GM12878 (cell line): ENCODE measurements at regions of chrX and their contacts with region 1.

Region 1: DNA sequence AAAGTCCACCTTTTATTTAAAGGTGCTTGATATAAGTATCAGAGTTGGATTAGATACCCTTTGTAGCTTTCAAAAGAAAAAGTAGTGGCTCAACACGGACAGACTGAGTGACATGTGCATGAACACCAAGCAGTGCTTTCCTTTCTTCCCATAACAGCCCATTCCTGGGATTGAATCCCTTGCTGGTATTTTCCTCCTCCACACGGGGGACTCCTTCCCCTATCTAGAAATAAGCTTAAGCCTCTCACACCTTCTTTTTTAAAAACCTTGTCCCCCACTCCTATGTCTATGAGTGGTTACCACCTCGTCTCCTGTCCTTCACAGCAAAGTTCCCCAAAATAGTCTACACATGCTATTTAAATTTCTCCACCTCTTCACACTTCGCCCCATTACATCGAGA is 5.1 kb downstream of the AP1S2 start:
- DNase-seq: no peak
- ATAC-seq: no peak
- H3K4me3 ChIP-seq: no peak overlapping the region
- H3K27ac ChIP-seq: no peak overlapping the region
- H3K4me1 ChIP-seq: no peaks in the 10 kb centered on the region
- H3K27me3 ChIP-seq: no peaks in the 10 kb centered on the region
- CTCF ChIP-seq: peak in 2 of 3 experiments; percentile 32 to 34; a peak in 2 of 6 replicates
- EP300 ChIP-seq: no peak
- POLR2A ChIP-seq: no peak
- RAD21 ChIP-seq: peak; percentile 42

Region 2: DNA sequence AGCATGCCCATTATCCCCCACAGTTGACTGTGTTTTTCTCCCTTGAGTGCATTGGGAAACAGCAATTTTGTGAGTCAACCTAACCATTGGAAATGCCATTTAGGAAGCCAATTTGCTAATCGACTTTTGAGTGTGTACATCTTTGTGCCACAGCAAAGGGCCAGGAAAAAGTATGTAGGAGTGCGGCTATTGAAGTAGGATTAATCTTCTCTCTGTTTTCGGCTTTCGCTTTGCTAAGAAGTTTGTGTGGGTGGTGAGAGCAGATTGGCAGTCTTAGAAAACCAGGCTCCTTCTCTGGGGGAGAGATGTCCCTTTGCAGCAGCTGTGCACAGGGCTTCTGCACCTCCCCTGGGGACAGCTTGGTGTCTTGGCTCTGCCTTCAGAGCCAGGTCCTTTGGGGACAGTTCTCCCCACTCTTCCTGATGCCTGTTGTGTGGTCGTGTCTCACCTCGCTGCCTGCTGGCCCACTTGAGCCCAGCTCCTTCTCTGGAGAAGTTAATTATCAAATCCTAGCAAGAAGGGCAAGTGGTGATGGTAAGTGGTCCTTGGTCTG is 1894.4 kb before region 1 on chrX:
- CTCF ChIA-PET with region 1: no interaction called
- POLR2A ChIA-PET with region 1: no interaction called
- RAD21 ChIA-PET with region 1: no interaction called
- SMC1A ChIA-PET with region 1: no interaction called
- in situ Hi-C with region 1: no loop called
- intact Hi-C with region 1: no loop called
- DNase-seq: no peak
- ATAC-seq: no peak
- H3K4me3 ChIP-seq: no peak overlapping the region
- H3K27ac ChIP-seq: no peak overlapping the region
- H3K4me1 ChIP-seq: no peaks in the 10 kb centered on the region
- H3K27me3 ChIP-seq: no peaks in the 10 kb centered on the region; a peak in 1 of 4 replicates
- CTCF ChIP-seq: no peak
- EP300 ChIP-seq: no peak
- POLR2A ChIP-seq: no peak
- RAD21 ChIP-seq: no peak

Region 3: DNA sequence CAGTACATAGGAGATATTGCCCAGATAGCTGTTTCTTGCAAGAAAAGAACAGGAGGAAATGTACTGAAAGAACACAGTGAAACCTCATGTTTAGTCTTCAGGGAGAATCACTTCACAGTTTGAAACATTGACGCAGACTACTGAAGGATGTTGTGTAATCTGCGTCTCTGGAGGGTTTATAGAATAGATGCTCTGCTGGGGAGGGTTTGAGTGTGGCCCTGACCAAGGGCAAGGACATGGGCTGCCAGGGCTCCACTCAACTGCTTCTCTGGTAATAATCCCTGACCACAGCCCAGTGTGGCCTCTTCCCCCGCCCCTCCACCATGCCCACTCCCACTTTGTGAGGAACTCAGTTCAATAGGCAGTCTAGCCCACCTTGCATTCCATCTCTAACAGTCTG is 233.0 kb before region 1 on chrX:
- CTCF ChIA-PET with region 1: no interaction called
- POLR2A ChIA-PET with region 1: no interaction called
- RAD21 ChIA-PET with region 1: no interaction called
- SMC1A ChIA-PET with region 1: no interaction called
- in situ Hi-C with region 1: no loop called
- intact Hi-C with region 1: no loop called
- DNase-seq: no peak
- ATAC-seq: no peak
- H3K4me3 ChIP-seq: no peak overlapping the region
- H3K27ac ChIP-seq: no peak overlapping the region
- H3K4me1 ChIP-seq: no peaks in the 10 kb centered on the region
- H3K27me3 ChIP-seq: peaks cover 2 to 3% of the 10 kb centered on the region in 2 experiments
- CTCF ChIP-seq: no peak
- EP300 ChIP-seq: no peak
- POLR2A ChIP-seq: no peak
- RAD21 ChIP-seq: no peak

Region 4: GRCh38 chrX:15761564-15762191 is 87.9 kb before region 1 on chrX:
- CTCF ChIA-PET with region 1: interaction called, 3 read pairs
- POLR2A ChIA-PET with region 1: no interaction called
- RAD21 ChIA-PET with region 1: no interaction called
- SMC1A ChIA-PET with region 1: no interaction called
- in situ Hi-C with region 1: no loop called
- intact Hi-C with region 1: loop called (anchors 5 kb)
- DNase-seq: no peak
- ATAC-seq: peak; percentile 90
- H3K4me3 ChIP-seq: no peak overlapping the region
- H3K27ac ChIP-seq: no peak overlapping the region
- H3K4me1 ChIP-seq: no peaks in the 10 kb centered on the region
- H3K27me3 ChIP-seq: no peaks in the 10 kb centered on the region
- CTCF ChIP-seq: peak; percentile 83 to 88 (median 87)
- EP300 ChIP-seq: no peak
- POLR2A ChIP-seq: no peak
- RAD21 ChIP-seq: peak; percentile 89

Region 5: GRCh38 chrX:15815779-15816437 is 33.6 kb before region 1 on chrX:
- CTCF ChIA-PET with region 1: interaction called, 11 read pairs
- POLR2A ChIA-PET with region 1: interaction called, 3 read pairs
- RAD21 ChIA-PET with region 1: interaction called, 11 read pairs
- SMC1A ChIA-PET with region 1: interaction called, 6 read pairs
- in situ Hi-C with region 1: no loop called
- intact Hi-C with region 1: no loop called
- DNase-seq: peak; percentile 8
- ATAC-seq: peak; percentile 96
- H3K4me3 ChIP-seq: no peak overlapping the region
- H3K27ac ChIP-seq: no peak overlapping the region
- H3K4me1 ChIP-seq: peaks cover 6% of the 10 kb centered on the region; the same call in 1 of the 2 replicates
- H3K27me3 ChIP-seq: no peaks in the 10 kb centered on the region
- CTCF ChIP-seq: peak; percentile 45 to 51 (median 49); a peak in 5 of 6 replicates
- EP300 ChIP-seq: no peak
- POLR2A ChIP-seq: no peak
- RAD21 ChIP-seq: peak; percentile 40; the same call in 1 of the 2 replicates

Region 6: GRCh38 chrX:15903186-15903681 is 53.7 kb after region 1 on chrX:
- CTCF ChIA-PET with region 1: no interaction called
- POLR2A ChIA-PET with region 1: interaction called, 5 read pairs
- RAD21 ChIA-PET with region 1: interaction called, 20 read pairs
- SMC1A ChIA-PET with region 1: interaction called, 16 read pairs
- in situ Hi-C with region 1: no loop called
- intact Hi-C with region 1: no loop called
- DNase-seq: peak; percentile 84
- ATAC-seq: peak; percentile 98
- H3K4me3 ChIP-seq: no peak overlapping the region
- H3K27ac ChIP-seq: peak overlapping the region; percentile 69
- H3K4me1 ChIP-seq: peaks cover 16% of the 10 kb centered on the region
- H3K27me3 ChIP-seq: no peaks in the 10 kb centered on the region
- CTCF ChIP-seq: no peak
- EP300 ChIP-seq: peak in 1 of 2 experiments; percentile 46; a peak in 1 of 4 replicates
- POLR2A ChIP-seq: no peak
- RAD21 ChIP-seq: no peak; the same call in 1 of the 2 replicates

Region 7: GRCh38 chrX:16123222-16123786 is 273.7 kb after region 1 on chrX and contains the start of gene GRPR:
- CTCF ChIA-PET with region 1: interaction called, 7 read pairs
- POLR2A ChIA-PET with region 1: no interaction called
- RAD21 ChIA-PET with region 1: interaction called, 12 read pairs
- SMC1A ChIA-PET with region 1: interaction called, 5 read pairs
- in situ Hi-C with region 1: no loop called
- intact Hi-C with region 1: loop called (anchors 1 kb)
- DNase-seq: no peak
- ATAC-seq: peak; percentile 88
- H3K4me3 ChIP-seq: no peak within 1 kb of the TSS
- H3K27ac ChIP-seq: no peak within 1 kb of the TSS
- H3K4me1 ChIP-seq: peaks cover 15% of the 10 kb centered on the region
- H3K27me3 ChIP-seq: peaks cover 0 to 2% of the 10 kb centered on the region in 2 experiments; a peak in 1 of 4 replicates
- CTCF ChIP-seq: peak; percentile 76 to 83 (median 79)
- EP300 ChIP-seq: no peak
- POLR2A ChIP-seq: no peak
- RAD21 ChIP-seq: peak; percentile 61
- polyA plus RNA-seq, gene GRPR: 0.21 TPM in 1 of 2 experiments, not detected in the other

Region 8: GRCh38 chrX:16445166-16445752 is 595.7 kb after region 1 on chrX:
- CTCF ChIA-PET with region 1: interaction called, 11 read pairs
- POLR2A ChIA-PET with region 1: no interaction called
- RAD21 ChIA-PET with region 1: interaction called, 4 read pairs
- SMC1A ChIA-PET with region 1: no interaction called
- in situ Hi-C with region 1: no loop called
- intact Hi-C with region 1: loop called (anchors 5 kb)
- DNase-seq: no peak
- ATAC-seq: peak; percentile 96
- H3K4me3 ChIP-seq: no peak overlapping the region
- H3K27ac ChIP-seq: no peak overlapping the region
- H3K4me1 ChIP-seq: no peaks in the 10 kb centered on the region
- H3K27me3 ChIP-seq: no peaks in the 10 kb centered on the region; a peak in 2 of 4 replicates
- CTCF ChIP-seq: peak; percentile 73 to 89 (median 74)
- EP300 ChIP-seq: no peak
- POLR2A ChIP-seq: no peak
- RAD21 ChIP-seq: peak; percentile 72